Motor neuron (in vitro differentiated cells): ENCODE measurements at regions of chr5 and their contacts with region 1.

Region 1: GRCh38 chr5:147628058-147628895 is 118.4 kb upstream of the DPYSL3 start:
- ATAC-seq: peak; percentile 65 to 94 (median 84)
- H3K4me3 ChIP-seq: no peak overlapping the region
- H3K27ac ChIP-seq: no peak overlapping the region
- H3K4me1 ChIP-seq: no peaks in the 10 kb centered on the region

Region 2: DNA sequence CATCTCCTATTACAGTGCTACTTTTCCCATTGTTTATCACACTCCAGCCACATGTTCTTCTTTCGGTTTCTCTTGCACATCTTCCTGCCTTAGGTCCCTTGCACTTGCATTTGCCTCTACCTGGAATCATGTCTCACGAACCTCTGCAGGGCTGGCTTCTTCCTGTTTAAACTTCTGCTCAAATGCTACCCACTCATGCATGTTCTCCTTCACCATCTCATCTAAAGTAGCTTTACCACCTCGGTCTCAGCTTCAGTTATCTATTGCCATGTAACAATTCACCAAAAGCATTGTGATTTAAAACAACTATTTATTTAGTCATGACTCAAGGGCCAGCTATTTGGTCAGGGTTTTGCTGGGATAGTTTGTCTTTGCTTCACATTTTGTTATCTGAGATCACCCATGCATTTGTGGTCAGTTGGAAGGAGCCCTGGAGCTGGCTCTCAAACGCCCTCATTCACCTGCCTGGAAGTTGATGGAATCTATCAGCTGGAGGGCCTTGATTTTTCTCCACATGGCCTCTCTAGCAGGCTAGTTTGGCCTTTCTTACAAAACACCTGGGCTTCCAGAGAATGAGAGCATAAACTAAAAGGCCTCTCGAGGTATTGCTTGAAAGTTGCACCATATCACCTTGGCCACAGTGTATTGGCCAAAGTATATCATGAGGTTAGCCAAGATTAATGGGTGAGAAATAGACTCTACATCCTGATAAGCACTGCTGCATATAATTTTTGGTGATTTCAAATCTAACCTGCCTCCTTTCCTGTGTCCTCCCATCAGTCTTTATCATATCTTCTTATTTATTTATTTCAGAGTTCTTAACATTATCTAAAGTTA is 181.8 kb after region 1 on chr5:
- in situ Hi-C with region 1: loop called in 6 of 9 experiments (anchors 10 to 25 kb)
- ATAC-seq: no peak
- H3K4me3 ChIP-seq: no peak overlapping the region
- H3K27ac ChIP-seq: no peak overlapping the region
- H3K4me1 ChIP-seq: no peaks in the 10 kb centered on the region

Region 3: DNA sequence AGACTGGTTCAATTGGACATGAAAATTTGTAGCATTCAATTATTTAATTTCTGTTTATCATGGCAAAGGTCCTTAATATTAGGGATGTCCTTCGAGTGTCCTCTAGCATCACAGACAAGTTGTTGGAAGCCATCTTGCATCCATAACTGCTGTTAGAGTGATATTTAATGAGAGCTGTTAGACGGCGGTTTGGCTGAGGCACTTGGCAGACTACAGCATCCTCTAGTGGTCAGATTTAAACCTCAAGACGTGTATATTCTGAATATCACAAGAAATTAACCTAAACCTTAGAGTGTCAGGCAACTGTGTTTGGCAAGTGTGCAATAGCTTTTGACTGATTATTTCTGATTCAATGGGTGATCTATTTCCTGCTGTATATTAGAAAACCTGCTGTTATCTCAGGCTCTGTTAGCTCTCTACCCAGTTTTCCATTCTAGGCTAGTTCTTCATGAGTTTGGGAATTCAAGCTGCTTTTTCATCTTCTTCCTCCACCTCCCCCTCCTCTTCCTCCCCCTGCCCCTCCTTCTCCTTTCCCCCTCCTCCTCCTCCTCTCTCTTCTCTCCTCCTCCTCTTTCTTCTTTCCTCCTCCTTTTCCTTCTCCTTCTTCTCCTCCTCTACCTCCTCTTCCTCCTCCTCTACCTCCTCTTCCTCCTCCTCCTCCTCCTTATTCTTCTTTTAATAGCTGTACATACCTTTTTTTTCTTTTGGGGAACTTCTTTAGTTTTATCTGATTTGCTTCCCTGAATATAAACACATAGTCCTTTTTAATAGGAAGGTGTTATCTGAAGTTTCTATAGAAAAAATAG is 194.6 kb after region 1 on chr5:
- in situ Hi-C with region 1: loop called (anchors 10 to 25 kb)
- ATAC-seq: peak; percentile 79 to 97 (median 92)
- H3K4me3 ChIP-seq: no peak overlapping the region
- H3K27ac ChIP-seq: no peak overlapping the region
- H3K4me1 ChIP-seq: peaks cover 0 to 2% of the 10 kb centered on the region in 2 donors

Region 4: DNA sequence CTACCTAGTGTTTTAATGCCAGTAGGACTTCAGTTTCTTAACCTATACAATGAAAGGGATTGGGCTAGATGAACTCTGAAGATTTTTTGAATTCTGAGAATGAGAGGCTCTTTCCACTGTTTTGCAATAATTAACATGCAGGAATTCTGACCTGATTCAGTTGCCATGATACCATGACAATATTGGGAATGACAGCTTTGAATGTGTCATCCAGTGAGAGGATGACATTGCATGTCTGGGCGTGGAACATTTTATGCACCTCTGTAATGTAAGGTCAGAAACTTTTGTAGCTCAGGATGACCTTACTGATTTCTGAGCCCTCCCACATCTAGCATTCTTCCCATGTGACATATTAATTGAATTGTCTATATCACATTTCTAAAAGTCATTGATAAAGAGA is 404.9 kb after region 1 on chr5:
- in situ Hi-C with region 1: no loop called
- ATAC-seq: peak; percentile 57 to 99 (median 80)
- H3K4me3 ChIP-seq: no peak overlapping the region
- H3K27ac ChIP-seq: peak overlapping the region in 1 of 2 donors; percentile 33
- H3K4me1 ChIP-seq: peaks cover 0 to 3% of the 10 kb centered on the region in 2 donors

Region 5: DNA sequence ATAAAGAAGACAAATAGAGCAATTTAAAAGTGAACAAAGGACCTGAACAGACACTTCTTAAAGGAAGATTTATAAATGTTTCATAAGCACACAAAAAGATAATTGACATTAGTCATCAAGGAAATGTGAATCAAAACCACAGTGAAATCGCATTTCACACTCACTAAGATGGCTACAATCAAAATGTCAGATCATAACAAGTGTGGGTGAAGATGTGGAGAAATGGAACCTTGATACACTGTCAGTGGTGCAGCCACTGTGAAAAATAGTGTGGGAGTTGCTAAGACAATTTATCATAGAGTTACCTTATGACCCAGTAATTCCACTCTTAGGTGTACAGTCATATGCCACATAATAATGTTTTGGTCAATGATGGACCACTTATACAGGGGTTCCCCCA is 1080.6 kb after region 1 on chr5:
- in situ Hi-C with region 1: no loop called
- ATAC-seq: no peak
- H3K4me3 ChIP-seq: no peak overlapping the region
- H3K27ac ChIP-seq: no peak overlapping the region
- H3K4me1 ChIP-seq: no peaks in the 10 kb centered on the region